ENCODE measurements at regions of chr10 and their contacts with region 1.

Region 1: DNA sequence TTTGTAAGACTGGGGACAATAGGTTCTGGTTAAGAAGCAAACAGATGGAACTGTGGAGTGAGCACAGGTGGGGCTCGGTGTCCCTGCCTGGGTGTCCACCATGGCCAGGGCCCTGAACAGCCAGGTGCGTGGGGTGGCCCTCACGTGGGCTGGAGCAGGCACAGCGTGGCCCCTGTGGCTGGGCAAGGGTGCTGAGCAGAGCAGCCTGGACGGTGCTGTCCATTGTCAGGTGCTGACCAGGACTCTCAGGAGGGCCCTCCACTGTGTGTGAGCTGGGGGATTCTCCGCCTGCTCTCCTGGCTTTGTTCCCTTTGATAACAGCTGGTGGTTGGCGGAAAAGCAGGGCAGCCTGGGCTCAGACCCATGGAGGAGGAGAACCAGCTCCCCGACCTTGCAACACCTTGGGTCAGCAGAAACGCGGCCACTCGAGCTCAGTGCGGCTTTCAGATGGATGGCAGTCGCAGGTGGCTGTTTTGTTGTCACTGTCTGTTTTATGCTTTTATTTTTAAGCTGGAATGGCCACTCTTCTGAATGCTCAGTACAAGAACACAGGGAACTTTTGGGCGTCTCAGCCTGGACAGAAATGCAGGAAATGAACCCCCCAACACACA is 273.9 kb upstream of the ADARB2 start:
- DNase-seq: no peak
- ATAC-seq: no peak
- H3K4me3 ChIP-seq: no peak overlapping the region
- H3K4me3 Mint-ChIP-seq: no peak overlapping the region
- H3K27ac ChIP-seq: no peak overlapping the region
- H3K27ac Mint-ChIP-seq: no peak overlapping the region
- H3K4me1 ChIP-seq: no peaks in the 10 kb centered on the region
- H3K4me1 Mint-ChIP-seq: no peaks in the 10 kb centered on the region
- H3K27me3 ChIP-seq: no peaks in the 10 kb centered on the region
- H3K27me3 Mint-ChIP-seq: peaks cover 0 to 4% of the 10 kb centered on the region in 2 donors
- CTCF ChIP-seq: no peak

Region 2: GRCh38 chr10:1754506-1755153 is 256.6 kb before region 1 on chr10:
- intact Hi-C with region 1: no loop called
- DNase-seq: no peak
- ATAC-seq: no peak
- H3K4me3 ChIP-seq: no peak overlapping the region
- H3K4me3 Mint-ChIP-seq: no peak overlapping the region
- H3K27ac ChIP-seq: no peak overlapping the region
- H3K27ac Mint-ChIP-seq: no peak overlapping the region
- H3K4me1 ChIP-seq: no peaks in the 10 kb centered on the region
- H3K4me1 Mint-ChIP-seq: no peaks in the 10 kb centered on the region
- H3K27me3 ChIP-seq: no peaks in the 10 kb centered on the region
- H3K27me3 Mint-ChIP-seq: peaks cover 7 to 18% of the 10 kb centered on the region in 2 donors
- CTCF ChIP-seq: no peak

Region 3: GRCh38 chr10:2025647-2026046 is 14.4 kb after region 1 on chr10:
- intact Hi-C with region 1: loop called (anchors 1 kb)
- DNase-seq: no peak
- ATAC-seq: no peak
- H3K4me3 ChIP-seq: no peak overlapping the region
- H3K4me3 Mint-ChIP-seq: no peak overlapping the region
- H3K27ac ChIP-seq: no peak overlapping the region
- H3K27ac Mint-ChIP-seq: no peak overlapping the region
- H3K4me1 ChIP-seq: peaks cover 3% of the 10 kb centered on the region
- H3K4me1 Mint-ChIP-seq: no peaks in the 10 kb centered on the region
- H3K27me3 ChIP-seq: no peaks in the 10 kb centered on the region
- H3K27me3 Mint-ChIP-seq: no peaks in the 10 kb centered on the region
- CTCF ChIP-seq: no peak

Measured in natural killer cell (primary cell).